OCI-LY7 (cell line): ENCODE measurements at regions of chr6 and their contacts with region 1.

Region 1: DNA sequence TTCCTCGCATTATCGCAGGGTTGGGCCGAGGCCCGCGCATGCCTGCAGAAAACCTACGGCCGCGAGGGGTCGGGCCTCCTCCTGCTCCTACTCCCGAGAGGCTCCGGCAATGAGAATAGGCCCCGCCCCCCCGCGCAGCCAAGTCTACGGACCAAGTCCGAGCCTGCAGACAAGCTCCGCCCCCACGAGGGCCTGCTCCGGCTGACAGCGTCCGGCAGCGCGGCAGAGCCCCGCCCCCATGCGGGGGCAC is 3.1 kb upstream of the GPSM3 start:
- DNase-seq: peak; percentile 100
- H3K4me3 ChIP-seq: peak overlapping the region; percentile 79
- H3K27ac ChIP-seq: peak overlapping the region; percentile 79
- H3K4me1 ChIP-seq: peaks cover 51% of the 10 kb centered on the region
- CTCF ChIP-seq: no peak

Region 2: GRCh38 chr6:31901953-31902643 is 293.5 kb before region 1 on chr6 and contains the start of gene ZBTB12:
- CTCF ChIA-PET with region 1: no interaction called
- POLR2A ChIA-PET with region 1: no interaction called
- intact Hi-C with region 1: loop called (anchors 1 kb)
- DNase-seq: peak; percentile 95
- H3K4me3 ChIP-seq: peak within 1 kb of the TSS; percentile 75
- H3K27ac ChIP-seq: peak within 1 kb of the TSS; percentile 11
- H3K4me1 ChIP-seq: peaks cover 30% of the 10 kb centered on the region
- CTCF ChIP-seq: no peak
- total RNA-seq, gene ZBTB12: 12.8 and 17.6 TPM in 2 replicates

Region 3: GRCh38 chr6:32118782-32119628 is 76.6 kb before region 1 on chr6:
- CTCF ChIA-PET with region 1: no interaction called
- POLR2A ChIA-PET with region 1: no interaction called
- intact Hi-C with region 1: loop called (anchors 2 kb)
- DNase-seq: peak; percentile 82
- H3K4me3 ChIP-seq: no peak overlapping the region
- H3K27ac ChIP-seq: no peak overlapping the region
- H3K4me1 ChIP-seq: peaks cover 5% of the 10 kb centered on the region
- CTCF ChIP-seq: peak; percentile 90

Region 4: GRCh38 chr6:32177788-32178546 is 17.6 kb before region 1 on chr6 and contains the start of gene RNF5:
- CTCF ChIA-PET with region 1: interaction called, 3 read pairs
- POLR2A ChIA-PET with region 1: interaction called, 16 read pairs
- intact Hi-C with region 1: loop called (anchors 1 kb)
- DNase-seq: peak; percentile 100
- H3K4me3 ChIP-seq: peak within 1 kb of the TSS; percentile 74
- H3K27ac ChIP-seq: peak within 1 kb of the TSS; percentile 56
- H3K4me1 ChIP-seq: peaks cover 41% of the 10 kb centered on the region
- CTCF ChIP-seq: no peak
- total RNA-seq, gene RNF5: 51.3 and 59.9 TPM in 2 replicates

Region 5: DNA sequence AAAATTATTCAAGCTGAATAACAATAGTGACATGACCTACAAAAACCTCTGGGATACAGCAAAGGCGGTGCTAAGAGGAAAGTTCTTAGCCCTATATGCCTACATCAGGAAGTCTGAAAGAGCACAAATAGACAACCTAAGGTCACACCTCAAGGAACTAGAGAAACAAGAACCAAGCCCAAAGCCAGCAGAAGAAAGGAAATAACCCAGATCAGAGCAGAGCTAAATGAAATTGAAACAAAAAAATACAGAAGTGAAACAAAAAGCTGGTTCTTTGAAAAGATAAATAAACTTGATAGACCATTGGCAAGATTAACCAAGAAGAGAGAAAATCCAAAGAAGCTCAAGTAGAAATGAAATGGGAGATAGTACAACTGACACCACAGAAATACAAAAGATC is 75.9 kb after region 1 on chr6:
- CTCF ChIA-PET with region 1: no interaction called
- POLR2A ChIA-PET with region 1: interaction called, 4 read pairs
- intact Hi-C with region 1: loop called (anchors 1 kb)
- DNase-seq: peak; percentile 94
- H3K4me3 ChIP-seq: peak overlapping the region; percentile 54
- H3K27ac ChIP-seq: peak overlapping the region; percentile 95
- H3K4me1 ChIP-seq: peaks cover 71% of the 10 kb centered on the region
- CTCF ChIP-seq: no peak